AG04449 (cell line): ENCODE measurements at regions of chr2 and their contacts with region 1.

Region 1: GRCh38 chr2:105114551-105114950 is 76.7 kb downstream of the MRPS9 start:
- DNase-seq: peak; percentile 40
- H3K4me3 ChIP-seq: no peak overlapping the region
- CTCF ChIP-seq: peak; percentile 61

Region 2: DNA sequence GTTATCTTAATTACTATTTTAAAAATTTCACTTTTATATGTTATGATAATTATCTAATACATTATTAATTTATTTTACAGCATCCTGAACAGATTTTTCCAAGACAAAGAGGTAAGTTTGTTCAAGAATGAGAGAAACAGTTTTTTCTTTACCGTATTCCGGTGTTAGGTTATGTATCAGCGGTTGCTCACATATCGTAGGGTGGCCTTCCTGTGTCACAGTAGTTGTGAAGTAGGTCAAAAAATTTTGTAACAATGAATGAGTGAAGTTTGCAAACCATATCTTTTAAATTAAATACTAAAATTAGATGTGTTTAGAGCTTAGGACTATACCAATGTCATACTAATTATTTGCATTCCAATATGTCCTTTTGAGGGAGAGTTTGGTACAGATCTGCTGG is 43.2 kb before region 1 on chr2:
- CTCF ChIA-PET with region 1: no interaction called
- POLR2A ChIA-PET with region 1: no interaction called
- DNase-seq: no peak
- H3K4me3 ChIP-seq: no peak overlapping the region
- CTCF ChIP-seq: no peak

Region 3: DNA sequence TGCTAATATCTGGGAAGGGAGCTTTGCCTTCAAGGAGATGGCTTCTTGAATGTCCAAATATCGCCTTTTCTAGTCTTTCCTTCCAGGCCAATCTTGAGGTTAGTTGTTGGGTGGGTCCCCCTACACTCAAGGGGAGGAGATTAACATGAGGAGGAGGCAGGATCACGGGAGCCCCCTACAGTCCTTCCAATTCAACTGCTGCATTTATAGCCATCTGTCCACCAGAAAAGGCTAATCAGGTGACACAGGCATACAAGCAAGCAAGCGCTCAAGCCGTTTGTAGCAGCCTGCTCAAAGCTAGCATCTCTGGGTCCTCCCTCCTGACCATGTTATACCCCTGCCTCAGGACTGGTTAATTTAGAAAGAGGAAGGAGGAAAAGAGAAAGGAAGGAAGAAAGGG is 10.9 kb after region 1 on chr2:
- CTCF ChIA-PET with region 1: interaction called, 38 read pairs
- POLR2A ChIA-PET with region 1: no interaction called
- DNase-seq: no peak
- H3K4me3 ChIP-seq: no peak overlapping the region
- CTCF ChIP-seq: no peak

Region 4: GRCh38 chr2:105235388-105236054 is 121.0 kb after region 1 on chr2:
- CTCF ChIA-PET with region 1: interaction called, 586 read pairs
- POLR2A ChIA-PET with region 1: no interaction called
- DNase-seq: no peak
- H3K4me3 ChIP-seq: no peak overlapping the region
- CTCF ChIP-seq: peak; percentile 71

Region 5: DNA sequence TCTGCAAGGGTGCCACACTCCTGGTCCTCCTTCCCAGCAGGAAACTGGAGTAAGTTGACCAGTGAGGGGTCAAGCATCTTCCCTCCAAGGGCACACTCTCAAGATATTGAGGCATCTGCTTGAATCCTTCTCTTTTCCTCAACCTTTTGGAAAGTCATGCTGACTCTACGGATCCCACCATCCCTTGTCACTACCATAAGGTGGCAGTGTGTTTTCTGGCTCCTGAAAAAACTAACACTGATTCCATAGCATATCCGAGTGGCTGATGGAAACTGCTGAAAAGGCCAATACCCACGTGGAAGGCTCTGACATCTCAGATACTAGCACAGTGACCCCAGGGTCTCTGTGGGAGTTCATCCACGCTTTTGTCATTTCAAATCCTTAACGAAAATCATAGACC is 164.1 kb after region 1 on chr2:
- CTCF ChIA-PET with region 1: interaction called, 11 read pairs
- POLR2A ChIA-PET with region 1: no interaction called
- DNase-seq: no peak
- H3K4me3 ChIP-seq: no peak overlapping the region
- CTCF ChIP-seq: no peak

Region 6: DNA sequence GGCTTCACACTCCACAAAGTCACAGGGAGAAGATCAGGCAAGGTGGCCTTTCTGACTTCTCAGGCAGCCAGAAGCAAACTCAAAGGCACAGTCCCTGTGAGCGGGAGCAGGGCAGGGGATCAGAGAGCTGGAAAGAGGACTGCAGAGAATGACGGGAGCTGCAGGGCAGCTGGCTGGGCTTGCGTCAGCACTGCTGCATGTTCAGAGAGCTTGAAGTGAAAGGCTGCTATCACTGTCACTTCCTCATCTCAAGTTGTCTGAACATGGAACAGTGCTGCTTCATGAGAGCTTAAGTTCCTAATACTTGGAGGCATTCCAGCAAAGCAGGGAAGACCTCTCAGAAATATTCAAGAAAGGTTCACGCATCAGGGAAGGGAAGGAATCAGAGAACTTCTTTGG is 194.6 kb after region 1 on chr2:
- CTCF ChIA-PET with region 1: interaction called, 11 read pairs
- POLR2A ChIA-PET with region 1: no interaction called
- DNase-seq: no peak
- H3K4me3 ChIP-seq: no peak overlapping the region
- CTCF ChIP-seq: no peak